ENCODE measurements at regions of chr11 and their contacts with region 1.

Region 1: GRCh38 chr11:10899121-10899830 is 41.4 kb upstream of the ZBED5 start:
- DNase-seq: no peak
- H3K4me3 ChIP-seq: no peak overlapping the region
- H3K27ac ChIP-seq: peak overlapping the region; percentile 75 to 82
- H3K4me1 ChIP-seq: peaks cover 0 to 32% (median 24%) of the 10 kb centered on the region in 4 experiments
- H3K27me3 ChIP-seq: no peaks in the 10 kb centered on the region

Region 2: DNA sequence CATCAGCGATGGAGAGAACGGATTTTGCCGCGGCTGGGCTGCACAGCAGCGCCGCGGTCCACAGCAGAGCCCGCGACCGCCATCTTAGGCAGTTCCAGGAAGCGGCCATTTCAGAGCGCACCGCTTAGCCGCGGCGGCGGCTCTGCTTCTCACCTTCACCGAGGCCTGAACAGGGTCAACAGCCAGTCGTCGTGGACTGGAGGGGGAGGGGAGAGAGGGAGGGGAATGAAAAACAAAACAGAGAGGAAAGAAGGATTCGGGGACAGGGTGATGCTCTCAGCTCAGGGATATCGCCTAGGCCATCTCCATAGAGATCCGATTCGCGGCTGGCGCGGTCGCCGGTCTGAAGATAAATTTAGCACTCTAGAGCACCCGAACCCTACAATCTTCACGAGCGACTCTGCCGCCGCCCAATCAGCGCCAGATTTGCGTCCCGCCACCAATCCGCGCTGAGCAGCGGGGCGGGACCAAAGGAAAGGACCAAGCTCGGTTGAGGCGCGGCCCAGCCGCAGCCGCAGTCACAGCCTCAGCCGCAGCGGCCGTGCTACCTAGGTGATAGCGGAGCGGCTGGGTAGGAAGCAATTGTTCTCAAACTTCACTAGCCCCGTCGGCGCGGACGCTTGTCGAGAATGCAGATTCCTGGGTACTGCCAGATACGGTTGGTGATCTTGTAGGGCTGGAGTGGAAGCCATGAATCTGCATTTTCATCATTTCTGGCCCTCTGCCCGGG is 41.4 kb before region 1 on chr11 and contains the start of gene ZBED5:
- CTCF ChIA-PET with region 1: interaction called, 3 read pairs
- POLR2A ChIA-PET with region 1: interaction called, 10 read pairs
- DNase-seq: peak; percentile 98 to 99 (median 99)
- H3K4me3 ChIP-seq: peak within 1 kb of the TSS; percentile 95 to 100 (median 99)
- H3K27ac ChIP-seq: peak within 1 kb of the TSS; percentile 89 to 96
- H3K4me1 ChIP-seq: peaks cover 11 to 26% (median 20%) of the 10 kb centered on the region in 4 experiments
- H3K27me3 ChIP-seq: no peaks in the 10 kb centered on the region

Region 3: GRCh38 chr11:10911907-10912306 is 12.6 kb after region 1 on chr11:
- CTCF ChIA-PET with region 1: interaction called, 14 read pairs
- POLR2A ChIA-PET with region 1: no interaction called
- DNase-seq: no peak
- H3K4me3 ChIP-seq: no peak overlapping the region
- H3K27ac ChIP-seq: no peak overlapping the region
- H3K4me1 ChIP-seq: no peaks in the 10 kb centered on the region
- H3K27me3 ChIP-seq: no peaks in the 10 kb centered on the region

Region 4: DNA sequence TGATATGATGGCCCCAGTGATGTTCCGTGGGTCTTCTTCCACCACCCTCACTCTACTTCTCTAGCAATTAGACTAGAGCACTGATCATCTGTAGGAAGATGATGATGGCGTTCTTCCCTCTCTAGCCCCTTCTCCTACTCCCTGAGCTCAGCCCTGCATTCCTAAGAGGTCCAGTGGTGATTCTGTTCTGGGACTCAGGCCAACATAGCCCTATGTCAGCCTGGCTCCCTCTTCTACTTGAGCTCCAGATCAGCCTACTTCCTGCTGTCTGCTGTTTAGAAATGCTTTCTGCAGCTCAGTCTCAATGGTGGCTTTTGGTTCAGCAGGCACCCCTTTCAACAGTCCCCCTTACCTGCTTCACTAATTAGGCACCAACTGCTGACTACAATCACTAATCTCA is 44.7 kb after region 1 on chr11:
- CTCF ChIA-PET with region 1: no interaction called
- POLR2A ChIA-PET with region 1: no interaction called
- DNase-seq: no peak
- H3K4me3 ChIP-seq: no peak overlapping the region
- H3K27ac ChIP-seq: no peak overlapping the region
- H3K4me1 ChIP-seq: no peaks in the 10 kb centered on the region
- H3K27me3 ChIP-seq: no peaks in the 10 kb centered on the region

Region 5: GRCh38 chr11:11022125-11022730 is 123.0 kb after region 1 on chr11:
- CTCF ChIA-PET with region 1: no interaction called
- POLR2A ChIA-PET with region 1: no interaction called
- DNase-seq: peak in 2 of 3 donors; percentile 40 to 61
- H3K4me3 ChIP-seq: no peak overlapping the region
- H3K27ac ChIP-seq: no peak overlapping the region
- H3K4me1 ChIP-seq: no peaks in the 10 kb centered on the region
- H3K27me3 ChIP-seq: peaks cover 0 to 3% (median 0%) of the 10 kb centered on the region in 5 experiments

Region 6: DNA sequence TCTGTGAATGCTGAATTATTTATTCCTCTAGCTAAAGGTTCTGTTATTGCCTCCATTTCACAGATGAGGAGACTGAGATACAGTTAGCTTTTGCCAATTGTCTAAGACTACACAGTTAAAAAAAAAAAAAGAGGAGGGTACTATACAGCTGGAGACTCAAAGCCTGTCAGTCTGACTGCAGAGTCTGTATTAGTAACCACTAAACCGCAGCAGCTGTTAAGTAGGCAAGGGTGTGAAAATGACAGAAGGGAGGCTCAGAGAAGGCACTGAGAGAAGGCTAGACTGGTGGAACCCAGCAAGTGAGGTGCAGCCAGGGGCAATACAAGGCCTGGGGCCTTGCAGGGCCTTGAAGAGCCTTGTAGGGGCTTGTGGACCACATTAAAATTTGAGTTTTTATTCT is 272.6 kb after region 1 on chr11:
- CTCF ChIA-PET with region 1: no interaction called
- POLR2A ChIA-PET with region 1: no interaction called
- DNase-seq: no peak
- H3K4me3 ChIP-seq: no peak overlapping the region
- H3K27ac ChIP-seq: no peak overlapping the region
- H3K4me1 ChIP-seq: no peaks in the 10 kb centered on the region
- H3K27me3 ChIP-seq: peaks cover 0 to 10% (median 0%) of the 10 kb centered on the region in 5 experiments

Measured in common myeloid progenitor, CD34-positive (primary cell).